Activated CD8-positive, alpha-beta T cell treated with anti-CD3 and anti-CD28 coated beads for 36 hours (primary cell): ENCODE measurements at regions of chr15 and their contacts with region 1.

Region 1: DNA sequence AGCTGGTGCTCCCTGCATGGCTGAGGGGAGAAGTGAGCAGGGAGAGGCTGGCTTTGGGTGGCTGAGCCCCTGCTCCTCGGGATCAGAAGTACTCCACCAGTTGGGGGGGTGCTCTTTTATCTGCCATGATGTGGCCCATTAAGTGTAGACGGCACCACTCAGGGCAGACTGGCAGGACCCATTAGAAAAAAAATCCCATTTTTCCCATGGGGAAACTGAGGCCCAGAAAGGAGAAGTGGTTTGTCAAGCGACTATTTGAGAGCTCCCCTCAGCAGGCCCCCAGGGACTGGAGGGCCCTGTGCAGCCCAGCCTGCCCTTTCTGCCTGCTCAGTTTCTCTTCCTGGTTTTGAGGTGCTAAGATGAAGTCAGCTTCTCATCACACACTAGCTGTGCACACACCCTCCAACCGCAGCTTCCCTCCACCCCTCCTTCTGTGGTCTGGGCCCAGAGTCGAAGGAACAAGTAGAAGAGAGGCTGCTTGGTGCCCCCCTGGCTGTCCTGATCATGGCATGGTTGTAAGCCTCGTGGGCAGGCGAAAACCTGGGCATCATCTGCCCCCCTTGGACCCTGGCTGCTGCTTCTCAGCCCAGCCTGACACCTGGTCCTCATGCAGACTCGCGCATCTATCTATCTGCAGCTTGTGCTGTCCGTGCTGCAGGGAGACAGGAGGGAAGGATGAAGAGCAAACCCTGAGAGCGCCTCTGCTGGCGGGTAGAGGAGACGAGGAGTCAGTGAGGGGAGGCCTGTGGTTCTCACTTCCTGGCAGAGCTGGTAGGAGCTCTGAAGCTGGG is 5.6 kb downstream of the CSK start:
- DNase-seq: peak; percentile 98
- ATAC-seq: peak; percentile 70
- H3K4me3 Mint-ChIP-seq: peak overlapping the region; percentile 98
- H3K27ac Mint-ChIP-seq: peak overlapping the region; percentile 98
- H3K4me1 Mint-ChIP-seq: peaks cover 53% of the 10 kb centered on the region
- H3K27me3 Mint-ChIP-seq: no peaks in the 10 kb centered on the region
- CTCF ChIP-seq: peak; percentile 81

Region 2: GRCh38 chr15:74453925-74454763 is 333.3 kb before region 1 on chr15:
- CTCF ChIA-PET with region 1: no interaction called
- POLR2A ChIA-PET with region 1: no interaction called
- intact Hi-C with region 1: no loop called
- DNase-seq: peak; percentile 63
- ATAC-seq: peak; percentile 88
- H3K4me3 Mint-ChIP-seq: no peak overlapping the region
- H3K27ac Mint-ChIP-seq: peak overlapping the region; percentile 73
- H3K4me1 Mint-ChIP-seq: peaks cover 38% of the 10 kb centered on the region
- H3K27me3 Mint-ChIP-seq: no peaks in the 10 kb centered on the region
- CTCF ChIP-seq: no peak

Region 3: DNA sequence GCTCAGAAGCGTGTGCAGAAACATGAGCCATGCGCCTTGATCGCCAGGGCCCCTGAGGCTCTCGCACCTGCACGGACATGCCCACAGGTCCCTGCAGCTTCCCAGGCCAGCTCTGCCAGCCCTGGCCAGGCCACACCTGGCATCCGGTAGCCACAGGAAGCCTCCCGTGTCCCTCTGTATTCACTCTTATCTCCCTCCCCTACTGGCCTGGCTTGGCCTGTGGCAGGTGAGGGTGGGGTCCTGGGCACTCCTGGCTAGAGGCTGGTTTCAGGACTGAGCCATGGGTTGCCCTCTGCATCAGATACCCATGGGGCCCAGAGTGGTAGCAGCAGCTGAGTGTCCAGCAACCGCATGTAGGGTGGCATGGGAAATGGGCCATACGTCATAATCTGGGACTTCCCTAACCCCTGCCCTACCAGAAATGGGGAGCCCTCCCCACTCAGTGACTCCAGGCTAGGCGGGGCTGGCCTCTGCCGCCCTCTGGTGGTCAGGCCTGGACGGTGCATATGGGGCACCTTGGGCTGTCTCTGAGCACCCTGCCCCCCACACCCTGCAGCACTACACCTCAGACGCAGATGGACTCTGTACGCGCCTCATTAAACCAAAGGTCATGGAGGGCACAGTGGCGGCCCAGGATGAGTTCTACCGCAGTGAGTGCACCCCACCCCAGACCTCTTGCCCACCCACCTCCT is 12.6 kb after region 1 on chr15:
- CTCF ChIA-PET with region 1: interaction called, 1,327 read pairs
- POLR2A ChIA-PET with region 1: interaction called, 410 read pairs
- intact Hi-C with region 1: no loop called
- DNase-seq: peak; percentile 91
- ATAC-seq: peak; percentile 91
- H3K4me3 Mint-ChIP-seq: no peak overlapping the region
- H3K27ac Mint-ChIP-seq: peak overlapping the region; percentile 90
- H3K4me1 Mint-ChIP-seq: peaks cover 46% of the 10 kb centered on the region
- H3K27me3 Mint-ChIP-seq: no peaks in the 10 kb centered on the region
- CTCF ChIP-seq: peak; percentile 98